ENCODE measurements at regions of chr3 and their contacts with region 1.

Region 1: DNA sequence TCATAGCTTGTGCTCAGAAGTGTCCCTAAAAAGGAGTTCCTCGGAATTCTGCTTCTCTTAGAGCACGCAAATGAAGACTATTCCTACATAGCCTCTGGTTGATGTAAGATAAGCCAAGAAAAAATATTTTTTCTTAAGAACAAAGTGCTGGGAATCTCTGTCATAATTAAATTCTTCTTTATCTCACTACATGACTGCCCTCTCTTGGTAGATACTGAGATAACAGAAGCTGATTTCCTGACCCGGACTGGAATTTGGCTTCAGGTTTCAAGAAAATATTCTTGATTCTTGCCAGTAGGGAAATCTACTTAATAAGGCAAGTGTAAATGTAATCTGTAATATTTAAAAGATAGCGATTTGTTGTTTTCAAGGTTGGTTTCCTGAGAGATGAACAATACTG is 31.3 kb upstream of the SETMAR start:
- DNase-seq: no peak
- ATAC-seq: peak; percentile 70
- H3K4me3 ChIP-seq: no peak overlapping the region
- H3K27ac ChIP-seq: no peak overlapping the region
- H3K4me1 ChIP-seq: no peaks in the 10 kb centered on the region
- H3K27me3 ChIP-seq: no peaks in the 10 kb centered on the region

Region 2: GRCh38 chr3:3191675-3192285 is 1080.1 kb before region 1 on chr3:
- intact Hi-C with region 1: loop called in 1 of 2 experiments (anchors 2 kb)
- DNase-seq: no peak
- ATAC-seq: no peak
- H3K4me3 ChIP-seq: no peak overlapping the region
- H3K27ac ChIP-seq: no peak overlapping the region
- H3K4me1 ChIP-seq: no peaks in the 10 kb centered on the region
- H3K27me3 ChIP-seq: no peaks in the 10 kb centered on the region

Region 3: GRCh38 chr3:4113811-4114522 is 157.9 kb before region 1 on chr3:
- intact Hi-C with region 1: no loop called
- DNase-seq: no peak
- ATAC-seq: no peak
- H3K4me3 ChIP-seq: no peak overlapping the region
- H3K27ac ChIP-seq: no peak overlapping the region
- H3K4me1 ChIP-seq: no peaks in the 10 kb centered on the region
- H3K27me3 ChIP-seq: no peaks in the 10 kb centered on the region

Region 4: DNA sequence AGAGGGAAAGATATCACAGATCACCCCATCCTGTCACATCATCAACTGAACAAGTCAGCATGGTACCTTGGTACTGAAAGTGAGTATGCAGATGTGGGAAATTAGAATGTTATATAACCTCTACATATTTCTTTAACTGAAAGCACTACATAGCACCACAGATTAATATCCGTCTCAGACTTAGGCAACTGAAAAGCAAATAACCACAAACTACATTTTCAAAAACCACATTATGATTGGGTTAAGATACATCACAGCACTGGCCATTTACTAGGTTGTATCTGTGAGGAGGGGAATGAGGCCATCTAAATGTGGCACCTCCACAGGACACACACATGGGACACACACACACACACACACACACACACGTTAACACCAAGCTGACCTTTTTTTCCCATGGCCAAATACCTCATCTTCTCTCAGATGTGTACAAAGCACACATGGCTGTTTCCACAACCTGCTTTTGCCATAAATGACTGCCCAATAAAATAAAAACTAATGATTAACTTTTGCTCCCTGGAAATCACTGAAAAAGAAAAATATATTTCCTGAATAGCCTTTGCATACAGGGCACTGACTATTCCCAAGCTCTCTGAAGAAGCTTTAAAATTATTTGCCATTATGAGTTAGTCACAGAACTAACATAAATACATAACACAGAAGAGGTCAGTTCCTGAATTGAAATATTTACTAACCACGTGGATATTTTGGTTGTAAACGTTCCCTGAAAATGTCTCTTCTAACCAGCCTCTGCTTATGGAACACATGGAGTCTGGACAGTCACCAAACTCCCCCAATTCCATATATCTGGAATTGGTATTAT is 135.1 kb after region 1 on chr3:
- intact Hi-C with region 1: no loop called
- DNase-seq: no peak
- ATAC-seq: no peak
- H3K4me3 ChIP-seq: no peak overlapping the region
- H3K27ac ChIP-seq: no peak overlapping the region
- H3K4me1 ChIP-seq: peaks cover 2 to 8% of the 10 kb centered on the region in 2 donors
- H3K27me3 ChIP-seq: no peaks in the 10 kb centered on the region

Region 5: GRCh38 chr3:4720279-4721075 is 448.6 kb after region 1 on chr3:
- intact Hi-C with region 1: no loop called
- DNase-seq: peak in 1 of 2 donors; percentile 75
- ATAC-seq: peak; percentile 86
- H3K4me3 ChIP-seq: no peak overlapping the region
- H3K27ac ChIP-seq: peak overlapping the region in 1 of 2 donors; percentile 49
- H3K4me1 ChIP-seq: peaks cover 0 to 2% of the 10 kb centered on the region in 2 donors
- H3K27me3 ChIP-seq: no peaks in the 10 kb centered on the region

Region 6: GRCh38 chr3:4906107-4906621 is 634.3 kb after region 1 on chr3:
- intact Hi-C with region 1: no loop called
- DNase-seq: no peak
- ATAC-seq: no peak
- H3K4me3 ChIP-seq: no peak overlapping the region
- H3K27ac ChIP-seq: no peak overlapping the region
- H3K4me1 ChIP-seq: peaks cover 0 to 2% of the 10 kb centered on the region in 2 donors
- H3K27me3 ChIP-seq: no peaks in the 10 kb centered on the region

Measured in aorta (tissue), 5 donors.